H1 (cell line): ENCODE measurements at regions of chr11 and their contacts with region 1.

Region 1: DNA sequence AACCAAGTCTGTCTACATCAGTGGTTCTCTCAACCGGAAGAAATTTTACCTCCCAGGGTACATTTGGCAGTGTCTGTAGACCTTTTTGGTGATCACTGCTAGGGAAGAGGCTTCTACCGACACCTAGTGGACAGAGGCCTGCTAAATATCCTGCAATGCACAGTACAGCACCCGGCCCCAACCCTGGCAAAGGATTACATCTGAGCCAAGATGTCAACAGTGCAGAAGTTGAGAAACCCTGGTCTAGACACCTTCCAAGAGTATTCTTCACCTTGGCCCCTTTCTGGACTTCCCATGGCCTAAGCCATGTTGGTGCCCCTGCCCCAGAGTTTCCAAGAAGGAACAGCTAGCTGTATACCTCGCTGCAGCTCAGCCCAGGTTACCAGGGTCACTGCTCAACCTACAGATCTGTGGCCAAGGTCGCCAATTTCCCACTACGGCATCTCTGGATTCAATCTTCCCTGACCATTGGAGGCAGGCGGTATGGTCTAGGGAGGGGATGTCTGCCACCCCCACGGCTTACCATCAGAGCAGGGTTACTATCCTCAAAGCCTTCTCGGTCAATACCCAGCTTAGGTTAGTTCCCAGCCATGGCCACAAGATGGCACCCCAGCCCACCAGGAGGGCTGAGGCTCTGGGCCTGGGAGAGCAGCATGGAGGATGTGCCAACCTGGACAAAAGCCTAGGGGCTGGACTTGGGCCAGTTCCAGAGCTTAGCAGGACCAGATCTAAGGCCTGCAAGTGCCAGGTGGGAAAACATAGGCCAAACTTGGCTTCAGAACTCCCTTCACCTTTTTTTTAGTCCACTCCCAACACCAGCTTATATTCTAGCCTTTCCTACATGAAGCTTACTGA is 3.7 kb upstream of the KCNC1 start:
- DNase-seq: peak; percentile 58 to 95
- H3K4me3 ChIP-seq: no peak overlapping the region
- H3K27ac ChIP-seq: no peak overlapping the region
- H3K4me1 ChIP-seq: peaks cover 0 to 4% (median under 1%) of the 10 kb centered on the region in 4 experiments; a peak in 3 of 7 replicates
- H3K27me3 ChIP-seq: peaks cover 9 to 30% (median 24%) of the 10 kb centered on the region in 4 experiments
- CTCF ChIP-seq: peak; percentile 93 to 98 (median 94)
- EP300 ChIP-seq: no peak
- POLR2A ChIP-seq: no peak
- RAD21 ChIP-seq: peak; percentile 98

Region 2: DNA sequence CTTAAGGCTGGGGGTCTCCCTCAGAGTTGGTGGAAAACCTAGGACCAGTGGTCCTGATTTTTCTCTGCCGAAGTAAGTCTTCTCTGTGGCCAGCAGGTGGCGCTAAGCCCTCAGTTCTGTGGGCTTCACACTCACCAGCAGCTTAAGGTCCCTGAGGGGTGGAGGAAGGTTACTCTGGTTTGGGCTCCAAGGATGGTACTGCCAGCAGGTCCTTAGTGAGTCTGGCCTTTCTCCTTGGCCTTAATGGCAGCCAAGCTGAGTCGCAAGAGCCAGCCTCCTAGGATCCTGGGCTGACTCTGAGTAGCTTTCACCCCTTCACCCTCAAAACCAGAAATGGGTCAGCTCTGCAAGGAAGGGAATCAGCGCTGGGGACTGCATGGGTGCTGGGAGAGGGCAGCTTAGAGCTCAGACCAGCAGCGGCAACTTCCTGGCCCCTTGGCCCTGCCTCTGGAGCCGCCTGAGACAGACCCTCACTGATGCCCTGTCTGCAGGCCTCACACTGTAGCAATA is 346.8 kb before region 1 on chr11:
- CTCF ChIA-PET with region 1: interaction called, 12 read pairs
- POLR2A ChIA-PET with region 1: no interaction called
- DNase-seq: peak; percentile 58 to 83
- H3K4me3 ChIP-seq: no peak overlapping the region
- H3K27ac ChIP-seq: no peak overlapping the region
- H3K4me1 ChIP-seq: peaks cover 0 to 8% (median 0%) of the 10 kb centered on the region in 4 experiments; a peak in 1 of 7 replicates
- H3K27me3 ChIP-seq: peaks cover 0 to 2% (median 0%) of the 10 kb centered on the region in 4 experiments; a peak in 1 of 7 replicates
- CTCF ChIP-seq: peak; percentile 79 to 97 (median 94)
- EP300 ChIP-seq: no peak
- POLR2A ChIP-seq: no peak
- RAD21 ChIP-seq: peak; percentile 98 to 100

Region 3: GRCh38 chr11:17635551-17635938 is 95.3 kb before region 1 on chr11:
- CTCF ChIA-PET with region 1: interaction called, 17 read pairs
- POLR2A ChIA-PET with region 1: no interaction called
- DNase-seq: no peak
- H3K4me3 ChIP-seq: no peak overlapping the region
- H3K27ac ChIP-seq: no peak overlapping the region
- H3K4me1 ChIP-seq: no peaks in the 10 kb centered on the region
- H3K27me3 ChIP-seq: no peaks in the 10 kb centered on the region
- CTCF ChIP-seq: peak; percentile 47 to 56 (median 53)
- EP300 ChIP-seq: no peak
- POLR2A ChIP-seq: no peak
- RAD21 ChIP-seq: peak; percentile 24 to 36; a peak in 2 of 4 replicates

Region 4: DNA sequence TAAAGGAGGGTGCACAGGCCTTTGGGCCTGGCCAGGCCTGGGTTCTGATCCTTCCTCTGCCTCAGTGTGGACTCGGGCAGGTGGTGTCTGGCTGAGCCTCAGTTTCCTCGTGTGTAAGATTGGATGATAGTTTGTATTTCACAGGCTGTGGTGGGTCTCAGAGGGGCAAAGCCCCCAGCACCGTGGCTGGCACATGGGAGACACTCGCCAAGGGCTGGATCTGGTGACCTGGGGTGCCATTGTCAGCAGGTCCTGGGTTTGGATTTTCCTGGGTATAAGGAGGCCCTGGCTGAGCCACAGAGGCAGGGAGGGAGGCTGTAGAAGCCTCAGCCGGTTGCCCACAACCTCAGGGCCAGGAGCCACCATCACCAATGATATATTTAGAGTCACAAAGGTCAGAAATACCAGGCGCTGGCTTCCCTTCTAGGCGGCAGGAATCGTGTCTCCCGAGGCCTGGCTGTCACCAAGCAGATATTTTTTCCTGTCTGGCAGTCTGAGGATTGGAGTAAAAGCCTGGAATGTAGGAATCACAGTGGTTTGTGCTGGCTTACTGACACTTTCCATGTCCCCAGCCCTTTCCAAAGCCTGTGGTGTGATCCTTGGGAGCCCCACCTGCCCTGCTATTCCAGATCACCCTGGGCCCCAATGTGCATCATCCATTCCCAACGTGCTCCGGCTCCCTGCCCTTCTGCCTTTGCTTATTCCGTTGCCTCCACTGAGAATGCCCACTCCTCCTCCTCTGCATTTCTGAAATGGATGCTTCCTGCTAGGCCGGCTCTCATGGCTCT is 19.4 kb after region 1 on chr11:
- CTCF ChIA-PET with region 1: interaction called, 290 read pairs
- POLR2A ChIA-PET with region 1: no interaction called
- DNase-seq: no peak
- H3K4me3 ChIP-seq: no peak overlapping the region
- H3K27ac ChIP-seq: no peak overlapping the region
- H3K4me1 ChIP-seq: no peaks in the 10 kb centered on the region
- H3K27me3 ChIP-seq: no peaks in the 10 kb centered on the region
- CTCF ChIP-seq: no peak
- EP300 ChIP-seq: no peak
- POLR2A ChIP-seq: no peak
- RAD21 ChIP-seq: no peak

Region 5: GRCh38 chr11:17821648-17822400 is 91.0 kb after region 1 on chr11:
- CTCF ChIA-PET with region 1: interaction called, 55 read pairs
- POLR2A ChIA-PET with region 1: no interaction called
- DNase-seq: no peak
- H3K4me3 ChIP-seq: no peak overlapping the region
- H3K27ac ChIP-seq: no peak overlapping the region
- H3K4me1 ChIP-seq: 0 out of 7 replicates have a peak, but pooled peaks cover 0 to 2% (median 0%) of the 10 kb centered on the region in 4 experiments
- H3K27me3 ChIP-seq: no peaks in the 10 kb centered on the region
- CTCF ChIP-seq: no peak
- EP300 ChIP-seq: no peak
- POLR2A ChIP-seq: no peak
- RAD21 ChIP-seq: no peak

Region 6: DNA sequence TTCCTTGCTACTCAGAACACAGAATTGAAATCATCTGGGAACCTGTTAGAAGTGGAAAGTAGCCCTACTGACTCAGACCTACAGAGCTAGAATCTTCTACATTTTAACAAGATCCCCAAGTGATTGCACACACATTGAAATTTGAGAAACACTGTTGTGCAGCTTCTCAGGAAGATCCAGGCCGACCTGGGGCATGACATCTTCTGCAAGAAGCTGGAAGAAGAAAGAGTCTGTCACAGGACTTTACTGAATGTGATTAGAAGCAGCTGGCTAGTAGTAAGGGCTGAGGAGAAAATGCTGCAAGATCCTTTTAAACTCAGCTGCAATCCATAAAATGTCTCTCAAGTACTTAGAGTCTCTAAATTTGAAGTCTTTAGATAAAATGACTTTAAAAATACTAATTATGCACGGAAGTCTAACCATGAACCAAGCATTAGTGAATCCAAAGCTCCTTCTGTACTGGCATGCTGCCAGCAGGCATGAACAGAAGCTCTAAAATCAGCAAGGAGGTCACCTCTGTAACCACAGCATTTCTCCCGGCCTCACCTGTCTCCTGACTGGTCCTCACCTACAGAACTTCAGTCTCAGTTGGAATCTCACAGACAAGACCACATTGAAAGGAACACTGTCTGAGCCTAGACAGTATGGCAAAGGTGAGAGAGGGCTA is 197.0 kb after region 1 on chr11:
- CTCF ChIA-PET with region 1: interaction called, 30 read pairs
- POLR2A ChIA-PET with region 1: no interaction called
- DNase-seq: no peak
- H3K4me3 ChIP-seq: no peak overlapping the region
- H3K27ac ChIP-seq: no peak overlapping the region
- H3K4me1 ChIP-seq: peaks cover 0 to 8% (median 2%) of the 10 kb centered on the region in 4 experiments; a peak in 2 of 7 replicates
- H3K27me3 ChIP-seq: no peaks in the 10 kb centered on the region
- CTCF ChIP-seq: no peak
- EP300 ChIP-seq: no peak
- POLR2A ChIP-seq: no peak
- RAD21 ChIP-seq: no peak

Region 7: GRCh38 chr11:18277565-18278271 is 546.9 kb after region 1 on chr11:
- CTCF ChIA-PET with region 1: no interaction called
- POLR2A ChIA-PET with region 1: no interaction called
- DNase-seq: no peak
- H3K4me3 ChIP-seq: no peak overlapping the region
- H3K27ac ChIP-seq: no peak overlapping the region
- H3K4me1 ChIP-seq: no peaks in the 10 kb centered on the region; a peak in 1 of 7 replicates
- H3K27me3 ChIP-seq: no peaks in the 10 kb centered on the region
- CTCF ChIP-seq: no peak
- EP300 ChIP-seq: no peak
- POLR2A ChIP-seq: no peak
- RAD21 ChIP-seq: no peak